Endothelial cell of umbilical vein (primary cell): ENCODE measurements at regions of chr3 and their contacts with region 1.

Region 1: DNA sequence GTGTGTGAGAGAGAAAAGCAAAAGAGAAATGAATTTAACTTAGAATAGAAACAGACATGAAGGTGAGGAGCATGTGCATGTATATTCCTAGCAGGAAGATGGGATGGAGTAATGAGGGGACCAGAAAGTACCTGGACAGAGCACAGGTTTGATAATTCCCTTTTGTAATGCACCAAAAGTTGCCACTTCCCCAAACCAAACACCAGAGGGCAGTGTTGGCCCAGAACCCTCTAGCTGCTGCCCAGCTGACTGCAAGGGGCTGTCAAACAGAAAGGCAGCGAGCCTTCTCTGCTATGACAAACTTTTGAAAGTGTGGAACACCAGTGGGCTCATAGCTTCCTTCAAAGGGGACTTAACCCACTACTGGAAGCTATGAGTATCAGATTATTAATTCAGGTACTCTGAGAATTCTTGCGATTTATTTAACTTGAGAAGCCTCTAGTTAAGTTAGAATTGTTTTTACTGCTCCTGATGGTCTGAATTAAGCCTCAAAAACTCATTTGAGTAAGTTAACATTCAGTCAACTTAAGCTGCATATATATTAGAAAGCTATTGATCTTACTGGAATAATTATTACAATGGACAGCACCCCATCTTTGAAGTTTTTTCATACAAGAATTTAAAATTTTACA is 234.9 kb downstream of the NEK10 start:
- DNase-seq: peak; percentile 72
- H3K4me3 ChIP-seq: no peak overlapping the region
- H3K27ac ChIP-seq: no peak overlapping the region
- H3K4me1 ChIP-seq: no peaks in the 10 kb centered on the region
- H3K27me3 ChIP-seq: no peaks in the 10 kb centered on the region
- CTCF ChIP-seq: peak; percentile 83 to 85
- POLR2A ChIP-seq: no peak

Region 2: DNA sequence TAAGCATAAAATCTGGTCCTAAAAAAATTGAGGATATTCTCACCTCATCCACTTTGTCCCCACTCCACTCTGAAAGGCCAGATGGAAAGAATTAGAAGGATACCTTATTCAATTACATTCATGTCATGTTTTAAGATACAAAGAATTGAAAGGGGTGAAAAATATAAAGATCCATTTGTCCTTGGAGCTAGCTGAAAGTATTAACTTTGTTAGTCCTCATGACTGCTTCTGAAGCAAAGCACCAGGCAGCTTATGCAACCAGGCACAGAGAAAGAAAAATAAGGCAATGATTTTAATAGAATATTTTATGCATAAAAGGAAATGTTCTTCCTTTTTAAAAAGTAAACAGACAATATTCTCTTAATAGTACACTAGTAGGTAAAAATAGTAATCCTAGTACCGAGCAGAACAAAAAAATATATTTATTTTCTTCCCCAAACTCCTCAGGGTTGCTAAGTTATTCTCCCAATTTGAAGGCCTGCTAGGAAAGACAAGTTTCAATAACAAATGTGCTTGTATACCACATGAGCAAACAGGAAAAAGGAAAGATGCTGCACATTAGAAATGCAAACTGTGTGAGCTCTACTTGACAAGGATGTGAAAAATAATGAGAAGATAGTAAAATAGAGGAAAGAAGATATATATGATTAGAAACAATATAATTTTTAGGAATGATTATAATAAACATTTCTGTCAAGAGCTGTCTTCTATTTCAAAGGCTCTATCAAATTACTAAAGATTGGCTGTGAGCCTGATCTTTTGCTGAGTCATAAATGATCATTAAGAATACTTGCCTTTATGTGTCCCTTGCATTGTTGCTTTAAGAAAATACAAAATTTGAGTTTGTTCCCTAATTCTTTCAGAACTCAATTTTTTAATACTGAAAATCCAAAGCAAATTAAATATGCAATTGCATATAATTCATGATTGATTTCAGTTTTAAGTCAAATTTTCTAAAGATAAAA is 60.5 kb after region 1 on chr3:
- CTCF ChIA-PET with region 1: no interaction called
- POLR2A ChIA-PET with region 1: no interaction called
- dilution Hi-C with region 1: no loop called
- intact Hi-C with region 1: no loop called
- DNase-seq: peak; percentile 25
- H3K4me3 ChIP-seq: no peak overlapping the region
- H3K27ac ChIP-seq: no peak overlapping the region
- H3K4me1 ChIP-seq: no peaks in the 10 kb centered on the region
- H3K27me3 ChIP-seq: no peaks in the 10 kb centered on the region
- CTCF ChIP-seq: no peak
- POLR2A ChIP-seq: no peak

Region 3: DNA sequence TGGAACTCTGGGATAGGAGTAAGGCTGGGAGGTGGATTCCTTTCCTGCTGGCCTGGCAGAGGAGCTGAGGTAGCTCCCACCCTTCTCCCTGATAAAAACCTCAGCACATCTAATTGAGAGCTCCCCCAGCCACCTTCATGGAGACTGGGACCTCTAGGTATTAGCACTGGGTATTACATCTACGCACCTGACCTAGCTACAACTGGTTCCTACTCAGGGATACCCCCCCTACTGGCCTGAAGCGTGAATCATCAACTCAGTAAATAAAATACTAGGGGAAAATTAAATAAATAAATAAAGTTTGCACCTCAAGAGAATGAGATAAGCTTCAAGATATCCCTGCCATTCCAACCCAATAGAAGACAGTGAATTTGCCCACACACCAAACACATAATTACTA is 94.5 kb after region 1 on chr3:
- CTCF ChIA-PET with region 1: interaction called, 16 read pairs
- POLR2A ChIA-PET with region 1: no interaction called
- dilution Hi-C with region 1: no loop called
- intact Hi-C with region 1: no loop called
- DNase-seq: no peak
- H3K4me3 ChIP-seq: no peak overlapping the region
- H3K27ac ChIP-seq: no peak overlapping the region
- H3K4me1 ChIP-seq: no peaks in the 10 kb centered on the region
- H3K27me3 ChIP-seq: no peaks in the 10 kb centered on the region
- CTCF ChIP-seq: no peak
- POLR2A ChIP-seq: no peak

Region 4: GRCh38 chr3:27279123-27279522 is 144.8 kb after region 1 on chr3:
- CTCF ChIA-PET with region 1: interaction called, 22 read pairs
- POLR2A ChIA-PET with region 1: no interaction called
- dilution Hi-C with region 1: no loop called
- intact Hi-C with region 1: loop called (anchors 1 kb)
- DNase-seq: peak; percentile 10
- H3K4me3 ChIP-seq: no peak overlapping the region
- H3K27ac ChIP-seq: no peak overlapping the region
- H3K4me1 ChIP-seq: no peaks in the 10 kb centered on the region
- H3K27me3 ChIP-seq: no peaks in the 10 kb centered on the region
- CTCF ChIP-seq: peak; percentile 23 to 26
- POLR2A ChIP-seq: no peak

Region 5: GRCh38 chr3:27467545-27467944 is 333.3 kb after region 1 on chr3:
- CTCF ChIA-PET with region 1: interaction called, 11 read pairs
- POLR2A ChIA-PET with region 1: no interaction called
- dilution Hi-C with region 1: no loop called
- intact Hi-C with region 1: loop called (anchors 1 kb)
- DNase-seq: peak; percentile 70
- H3K4me3 ChIP-seq: no peak overlapping the region
- H3K27ac ChIP-seq: no peak overlapping the region
- H3K4me1 ChIP-seq: peaks cover 8% of the 10 kb centered on the region
- H3K27me3 ChIP-seq: no peaks in the 10 kb centered on the region
- CTCF ChIP-seq: peak; percentile 36 to 40
- POLR2A ChIP-seq: no peak

Region 6: GRCh38 chr3:28286595-28286994 is 1152.3 kb after region 1 on chr3:
- CTCF ChIA-PET with region 1: interaction called, 10 read pairs
- POLR2A ChIA-PET with region 1: no interaction called
- dilution Hi-C with region 1: no loop called
- intact Hi-C with region 1: no loop called
- DNase-seq: peak; percentile 54
- H3K4me3 ChIP-seq: no peak overlapping the region
- H3K27ac ChIP-seq: no peak overlapping the region
- H3K4me1 ChIP-seq: no peaks in the 10 kb centered on the region
- H3K27me3 ChIP-seq: no peaks in the 10 kb centered on the region
- CTCF ChIP-seq: peak; percentile 27 to 29
- POLR2A ChIP-seq: no peak